ENCODE measurements at regions of chr6 and their contacts with region 1.

Region 1: GRCh38 chr6:138004423-138005287 is 102.6 kb downstream of the PERP start:
- DNase-seq: no peak
- H3K4me3 ChIP-seq: no peak overlapping the region
- H3K27ac ChIP-seq: no peak overlapping the region
- H3K4me1 ChIP-seq: peaks cover 0 to 4% of the 10 kb centered on the region in 2 donors
- H3K27me3 ChIP-seq: no peaks in the 10 kb centered on the region
- CTCF ChIP-seq: peak in 3 of 6 experiments; percentile 32 to 43 (median 36)
- POLR2A ChIP-seq: no peak

Region 2: GRCh38 chr6:138109042-138109997 is 104.7 kb after region 1 on chr6:
- intact Hi-C with region 1: loop called (anchors 2 kb)
- DNase-seq: peak; percentile 63 to 64
- H3K4me3 ChIP-seq: no peak overlapping the region
- H3K27ac ChIP-seq: no peak overlapping the region
- H3K4me1 ChIP-seq: peaks cover 0 to 10% of the 10 kb centered on the region in 2 donors
- H3K27me3 ChIP-seq: no peaks in the 10 kb centered on the region
- CTCF ChIP-seq: peak; percentile 68 to 95 (median 90)
- POLR2A ChIP-seq: no peak

Measured in thyroid gland (tissue), 4 donors.